Activated CD4-positive, alpha-beta memory T cell treated with anti-CD3 and anti-CD28 coated beads for 36 hours (primary cell): ENCODE measurements at regions of chrX and their contacts with region 1.

Region 1: GRCh38 chrX:104165894-104166737 is at the start of gene FAM199X:
- DNase-seq: peak; percentile 89
- H3K4me3 Mint-ChIP-seq: peak within 1 kb of the TSS; percentile 75
- H3K27ac Mint-ChIP-seq: peak within 1 kb of the TSS; percentile 73
- H3K4me1 Mint-ChIP-seq: peaks cover 35% of the 10 kb centered on the region
- H3K27me3 Mint-ChIP-seq: no peaks in the 10 kb centered on the region
- total RNA-seq, gene FAM199X: 8.3 to 9.1 TPM

Region 2: DNA sequence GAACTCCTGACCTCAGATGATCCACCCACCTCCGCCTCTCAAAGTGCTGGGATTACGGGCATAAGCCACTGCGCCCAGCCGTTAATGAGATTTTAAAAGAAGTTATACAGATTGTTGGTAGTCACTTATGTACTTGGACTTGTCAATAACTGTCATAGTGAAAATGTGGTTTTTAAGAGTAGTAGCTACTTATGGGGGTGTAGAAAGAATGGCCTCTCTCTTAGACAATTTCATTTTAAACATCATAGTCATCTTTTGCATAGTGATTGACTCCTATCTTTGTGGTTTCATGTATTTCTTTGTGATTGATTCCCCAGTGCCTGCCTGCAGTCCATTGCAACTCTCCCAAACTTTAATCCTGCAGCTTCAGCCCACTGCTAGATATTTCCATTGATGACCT is 17.6 kb after region 1 on chrX:
- CTCF ChIA-PET with region 1: no interaction called
- POLR2A ChIA-PET with region 1: no interaction called
- intact Hi-C with region 1: loop called (anchors 2 kb)
- DNase-seq: peak; percentile 11
- H3K4me3 Mint-ChIP-seq: no peak overlapping the region
- H3K27ac Mint-ChIP-seq: no peak overlapping the region
- H3K4me1 Mint-ChIP-seq: peaks cover 29% of the 10 kb centered on the region
- H3K27me3 Mint-ChIP-seq: no peaks in the 10 kb centered on the region

Region 3: DNA sequence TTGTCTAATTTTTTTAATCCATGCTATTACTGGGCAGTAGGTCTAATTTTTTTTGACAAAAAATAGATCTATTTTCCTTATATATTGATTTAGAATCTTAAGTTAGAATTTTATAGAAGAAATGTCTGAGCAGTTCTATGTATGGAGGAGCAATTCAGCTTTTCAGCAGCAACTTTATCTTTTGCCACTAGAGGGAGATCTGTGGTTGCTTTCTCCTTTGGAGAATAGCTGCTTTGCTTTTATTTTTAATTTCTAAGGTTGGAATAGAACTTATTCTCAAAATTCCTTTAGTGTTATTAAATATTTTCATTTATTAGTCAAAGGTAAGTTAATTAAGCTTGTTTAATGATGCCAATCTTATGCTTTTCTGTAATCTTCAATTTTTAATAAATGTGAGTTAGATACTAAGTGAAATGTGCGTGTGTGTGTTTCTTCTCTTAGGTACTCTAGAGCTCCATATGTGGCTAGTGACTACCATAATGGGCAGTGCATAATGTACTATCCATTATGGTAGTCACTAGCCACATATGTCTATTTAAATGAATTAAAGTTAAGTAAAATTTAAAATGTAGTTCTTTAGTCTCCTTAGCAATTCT is 29.5 kb after region 1 on chrX:
- CTCF ChIA-PET with region 1: interaction called, 12 read pairs
- POLR2A ChIA-PET with region 1: no interaction called
- intact Hi-C with region 1: loop called (anchors 2 kb)
- DNase-seq: no peak
- H3K4me3 Mint-ChIP-seq: no peak overlapping the region
- H3K27ac Mint-ChIP-seq: no peak overlapping the region
- H3K4me1 Mint-ChIP-seq: peaks cover 5% of the 10 kb centered on the region
- H3K27me3 Mint-ChIP-seq: no peaks in the 10 kb centered on the region

Region 4: DNA sequence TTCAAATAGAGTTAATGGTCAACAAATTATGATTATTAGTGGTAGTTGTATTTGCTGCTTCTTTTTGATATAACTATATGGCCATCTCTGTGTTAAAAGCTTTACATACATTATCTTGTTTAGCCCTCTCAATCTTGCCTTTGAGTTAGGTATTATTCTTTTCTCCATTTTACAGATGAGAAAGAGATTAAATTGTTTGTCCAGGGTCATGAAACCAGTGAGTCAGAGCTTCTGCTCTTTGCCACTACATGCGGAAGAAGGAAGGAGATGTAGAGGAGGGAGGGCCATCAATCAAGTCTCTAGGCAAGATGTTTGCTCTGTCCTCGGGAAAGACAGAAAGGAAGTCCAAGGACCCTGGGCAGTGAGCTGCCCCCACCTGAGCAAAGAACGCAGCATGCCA is 266.1 kb after region 1 on chrX:
- CTCF ChIA-PET with region 1: no interaction called
- POLR2A ChIA-PET with region 1: no interaction called
- intact Hi-C with region 1: no loop called
- DNase-seq: no peak
- H3K4me3 Mint-ChIP-seq: no peak overlapping the region
- H3K27ac Mint-ChIP-seq: no peak overlapping the region
- H3K4me1 Mint-ChIP-seq: no peaks in the 10 kb centered on the region
- H3K27me3 Mint-ChIP-seq: peaks cover 4% of the 10 kb centered on the region